Gastrocnemius medialis (tissue), 4 donors: ENCODE measurements at regions of chr18 and their contacts with region 1.

Region 1: DNA sequence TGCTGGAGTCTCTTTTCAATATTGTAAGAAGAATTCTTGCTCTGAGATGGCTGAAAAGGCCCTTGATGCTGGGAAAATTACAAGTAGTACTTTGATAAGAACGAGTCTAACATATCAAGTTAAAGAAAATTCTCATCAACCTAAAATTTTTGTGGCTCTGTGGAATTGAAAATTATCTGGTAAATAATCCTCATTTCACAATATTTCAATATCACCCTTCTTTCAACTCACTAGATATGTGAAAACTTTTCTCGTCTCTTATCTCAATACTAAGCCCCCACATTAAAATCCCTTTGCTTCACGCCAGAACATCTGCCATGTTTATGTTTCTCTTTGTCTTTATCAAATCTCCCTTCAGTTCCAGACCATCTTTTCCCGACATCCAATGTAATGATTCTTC is 448.8 kb downstream of the ZNF516 start:
- DNase-seq: no peak
- ATAC-seq: no peak
- H3K4me3 ChIP-seq: no peak overlapping the region
- H3K27ac ChIP-seq: no peak overlapping the region
- H3K4me1 ChIP-seq: no peaks in the 10 kb centered on the region
- H3K27me3 ChIP-seq: no peaks in the 10 kb centered on the region
- CTCF ChIP-seq: no peak
- POLR2A ChIP-seq: no peak

Region 2: DNA sequence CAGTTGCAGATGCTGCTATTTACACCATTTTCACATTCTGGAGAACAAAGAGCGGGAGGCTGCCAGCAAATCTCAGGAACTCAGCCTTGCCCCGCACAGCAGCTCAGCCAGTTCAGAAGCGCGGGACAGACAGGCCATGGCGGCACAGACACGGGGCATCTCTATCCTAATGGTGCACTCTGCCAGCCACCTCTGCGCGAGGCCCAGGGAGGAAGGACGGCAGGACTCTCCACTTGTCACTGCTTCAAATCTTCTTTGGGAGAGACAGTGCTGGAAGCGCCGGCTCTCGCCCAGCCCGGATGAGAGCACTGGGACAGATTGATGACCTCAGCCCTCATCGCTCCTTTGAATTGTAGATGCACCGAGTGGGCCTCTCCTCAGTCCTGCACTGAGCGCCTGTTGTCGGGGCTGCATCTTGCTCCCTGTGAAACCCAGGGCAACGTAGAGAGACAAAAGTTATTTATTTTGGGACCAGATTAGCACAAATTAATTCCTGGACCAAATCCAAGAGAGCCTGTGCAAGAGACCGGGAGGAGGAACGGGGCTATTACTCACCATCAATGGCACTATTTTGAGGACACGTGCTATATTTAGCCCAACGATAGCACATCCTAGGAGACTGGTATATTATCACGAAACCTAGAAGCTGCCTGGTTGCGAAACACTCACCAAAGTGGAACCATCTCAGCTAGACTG is 407.3 kb before region 1 on chr18:
- in situ Hi-C with region 1: no loop called
- intact Hi-C with region 1: loop called (anchors 5 kb)
- DNase-seq: no peak
- ATAC-seq: no peak
- H3K4me3 ChIP-seq: peak overlapping the region in 1 of 4 donors; percentile 7
- H3K27ac ChIP-seq: no peak overlapping the region
- H3K4me1 ChIP-seq: no peaks in the 10 kb centered on the region
- H3K27me3 ChIP-seq: no peaks in the 10 kb centered on the region
- CTCF ChIP-seq: no peak
- POLR2A ChIP-seq: no peak

Region 3: GRCh38 chr18:76339246-76339620 is 293.0 kb after region 1 on chr18:
- in situ Hi-C with region 1: no loop called
- intact Hi-C with region 1: no loop called
- DNase-seq: no peak
- ATAC-seq: no peak
- H3K4me3 ChIP-seq: no peak overlapping the region
- H3K27ac ChIP-seq: no peak overlapping the region
- H3K4me1 ChIP-seq: no peaks in the 10 kb centered on the region
- H3K27me3 ChIP-seq: no peaks in the 10 kb centered on the region
- CTCF ChIP-seq: no peak
- POLR2A ChIP-seq: no peak

Region 4: GRCh38 chr18:76363436-76364120 is 317.4 kb after region 1 on chr18:
- in situ Hi-C with region 1: no loop called
- intact Hi-C with region 1: no loop called
- DNase-seq: no peak
- ATAC-seq: no peak
- H3K4me3 ChIP-seq: no peak overlapping the region
- H3K27ac ChIP-seq: no peak overlapping the region
- H3K4me1 ChIP-seq: no peaks in the 10 kb centered on the region
- H3K27me3 ChIP-seq: no peaks in the 10 kb centered on the region
- CTCF ChIP-seq: no peak
- POLR2A ChIP-seq: no peak